HCT116 (cell line): ENCODE measurements at regions of chr7 and their contacts with region 1.

Region 1: DNA sequence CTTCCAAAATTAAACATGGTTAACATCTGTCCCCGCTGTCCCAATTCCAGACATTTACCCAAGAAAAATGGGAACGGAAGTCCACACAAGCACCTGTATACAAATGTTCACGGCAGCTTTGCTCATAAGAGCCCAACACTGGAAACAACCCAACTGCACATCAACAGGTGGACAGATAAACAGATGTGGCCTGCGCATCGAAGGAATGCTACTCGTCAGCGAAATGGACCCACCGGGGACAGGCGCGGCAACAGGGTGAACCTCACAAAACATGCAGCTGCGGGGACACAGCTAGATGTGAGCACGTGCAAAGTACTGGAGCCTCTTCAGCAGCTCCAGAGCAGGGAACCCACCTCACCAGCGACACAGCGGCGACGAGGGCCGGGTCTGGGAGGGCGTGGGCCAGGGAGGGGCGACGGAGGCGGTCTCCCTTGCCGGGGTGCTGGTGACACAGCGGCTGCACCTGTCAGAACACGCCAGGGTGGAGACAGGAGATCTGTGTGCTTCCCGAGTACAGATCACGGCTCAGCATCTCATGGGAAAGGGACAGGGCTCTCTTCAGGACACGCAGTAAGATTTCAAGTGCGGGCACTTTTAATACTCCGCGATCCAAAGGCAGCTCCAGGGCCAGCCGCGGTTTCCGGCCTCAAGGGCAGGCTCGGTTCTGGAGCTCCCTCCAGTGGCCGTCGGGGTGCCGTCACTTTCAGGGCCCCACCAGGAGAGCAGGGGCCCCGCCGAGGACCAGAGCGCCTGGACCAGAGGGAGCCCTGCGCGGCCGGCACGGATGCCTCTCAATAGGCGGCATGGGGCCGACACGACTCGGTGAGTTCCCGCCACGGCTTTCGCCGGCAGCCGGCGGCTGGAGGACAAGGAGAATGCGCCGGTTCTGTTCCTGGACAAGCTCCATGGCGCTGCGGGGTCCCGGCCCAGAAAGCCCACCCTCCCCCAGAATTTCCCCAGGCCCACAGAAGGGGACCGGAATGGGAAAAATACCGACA is 21.2 kb downstream of the GPR146 start:
- DNase-seq: no peak
- ATAC-seq: peak; percentile 98
- H3K4me3 ChIP-seq: no peak overlapping the region
- H3K27ac ChIP-seq: no peak overlapping the region; the same call in 1 of the 2 replicates
- H3K4me1 ChIP-seq: 0 out of 4 replicates have a peak, but pooled peaks cover 0 to 2% of the 10 kb centered on the region in 2 experiments
- H3K27me3 ChIP-seq: no peaks in the 10 kb centered on the region
- CTCF ChIP-seq: peak; percentile 78 to 98 (median 91)
- POLR2A ChIP-seq: no peak
- RAD21 ChIP-seq: peak; percentile 94

Region 2: DNA sequence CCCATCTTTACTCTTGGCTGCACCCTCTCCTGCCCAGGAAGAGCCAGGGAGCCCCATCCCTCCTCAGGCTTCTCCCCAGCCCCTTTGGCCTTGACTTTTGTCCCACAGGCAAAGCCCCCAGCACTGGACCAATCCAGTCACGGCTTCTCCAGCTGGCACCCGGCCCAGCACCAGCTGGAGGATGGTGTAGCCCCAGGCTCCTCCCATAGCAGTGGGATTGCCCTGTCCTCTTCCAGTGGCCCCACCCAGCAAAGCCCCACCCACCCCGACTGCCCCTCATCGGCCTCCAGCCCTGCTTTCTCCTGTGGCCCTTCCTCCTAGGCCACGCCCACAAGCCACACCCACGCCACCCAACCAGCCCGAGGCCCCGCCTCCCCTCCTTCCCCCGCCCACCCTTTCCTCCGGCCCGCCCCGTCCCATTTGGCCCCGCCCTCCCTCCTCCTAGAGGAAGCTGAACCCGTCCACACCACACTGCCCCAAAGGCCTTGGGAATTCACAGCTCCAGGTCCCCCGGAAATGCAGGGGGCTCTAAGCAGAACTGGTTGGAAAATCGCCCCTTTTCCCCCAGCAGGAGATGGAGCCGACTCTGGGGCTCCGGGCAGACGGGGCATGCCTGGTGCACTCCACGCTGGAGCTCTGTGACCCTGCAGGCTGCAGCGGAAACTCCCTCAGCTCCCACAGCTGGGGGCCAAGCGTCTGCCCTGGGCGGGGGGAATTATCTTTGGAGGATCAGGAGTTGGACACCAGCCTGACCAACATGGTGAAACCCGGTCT is 164.0 kb before region 1 on chr7:
- CTCF ChIA-PET with region 1: no interaction called
- POLR2A ChIA-PET with region 1: no interaction called
- RAD21 ChIA-PET with region 1: no interaction called
- intact Hi-C with region 1: loop called (anchors 10 kb)
- DNase-seq: peak; percentile 76
- ATAC-seq: peak; percentile 92
- H3K4me3 ChIP-seq: no peak overlapping the region
- H3K27ac ChIP-seq: peak overlapping the region; percentile 35; the same call in 1 of the 2 replicates
- H3K4me1 ChIP-seq: peaks cover 7 to 9% of the 10 kb centered on the region in 2 experiments
- H3K27me3 ChIP-seq: 0 out of 2 replicates have a peak, but pooled peaks cover 2% of the 10 kb centered on the region
- CTCF ChIP-seq: no peak
- POLR2A ChIP-seq: no peak
- RAD21 ChIP-seq: no peak

Region 3: DNA sequence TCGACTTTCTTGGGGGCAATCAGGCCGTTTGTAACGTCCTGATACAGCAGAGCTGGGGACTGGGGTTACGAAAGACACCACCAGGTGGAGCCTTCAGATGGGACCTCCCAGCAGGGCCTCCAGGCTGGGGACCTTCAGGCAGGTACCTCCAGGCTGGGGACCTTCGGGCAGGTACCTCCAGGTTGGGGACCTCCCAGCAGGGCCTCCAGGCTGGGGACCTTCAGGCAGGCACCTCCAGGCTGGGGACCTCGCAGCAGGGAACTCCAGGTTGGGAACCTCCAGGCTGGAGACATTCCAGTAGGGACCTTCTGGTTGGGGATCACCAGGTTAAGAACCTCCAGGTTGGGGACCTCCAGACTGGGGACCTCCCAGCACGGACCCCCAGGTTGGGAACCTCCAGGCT is 44.7 kb before region 1 on chr7:
- CTCF ChIA-PET with region 1: interaction called, 7 read pairs
- POLR2A ChIA-PET with region 1: no interaction called
- RAD21 ChIA-PET with region 1: no interaction called
- intact Hi-C with region 1: loop called (anchors 2 kb)
- DNase-seq: no peak
- ATAC-seq: peak; percentile 56
- H3K4me3 ChIP-seq: no peak overlapping the region
- H3K27ac ChIP-seq: no peak overlapping the region
- H3K4me1 ChIP-seq: no peaks in the 10 kb centered on the region
- H3K27me3 ChIP-seq: no peaks in the 10 kb centered on the region
- CTCF ChIP-seq: peak in 2 of 3 experiments; percentile 26 to 33; a peak in 2 of 6 replicates
- POLR2A ChIP-seq: no peak
- RAD21 ChIP-seq: no peak